Activated naive CD4-positive, alpha-beta T cell treated with anti-CD3 and anti-CD28 coated beads for 36 hours (primary cell): ENCODE measurements at regions of chr4 and their contacts with region 1.

Region 1: DNA sequence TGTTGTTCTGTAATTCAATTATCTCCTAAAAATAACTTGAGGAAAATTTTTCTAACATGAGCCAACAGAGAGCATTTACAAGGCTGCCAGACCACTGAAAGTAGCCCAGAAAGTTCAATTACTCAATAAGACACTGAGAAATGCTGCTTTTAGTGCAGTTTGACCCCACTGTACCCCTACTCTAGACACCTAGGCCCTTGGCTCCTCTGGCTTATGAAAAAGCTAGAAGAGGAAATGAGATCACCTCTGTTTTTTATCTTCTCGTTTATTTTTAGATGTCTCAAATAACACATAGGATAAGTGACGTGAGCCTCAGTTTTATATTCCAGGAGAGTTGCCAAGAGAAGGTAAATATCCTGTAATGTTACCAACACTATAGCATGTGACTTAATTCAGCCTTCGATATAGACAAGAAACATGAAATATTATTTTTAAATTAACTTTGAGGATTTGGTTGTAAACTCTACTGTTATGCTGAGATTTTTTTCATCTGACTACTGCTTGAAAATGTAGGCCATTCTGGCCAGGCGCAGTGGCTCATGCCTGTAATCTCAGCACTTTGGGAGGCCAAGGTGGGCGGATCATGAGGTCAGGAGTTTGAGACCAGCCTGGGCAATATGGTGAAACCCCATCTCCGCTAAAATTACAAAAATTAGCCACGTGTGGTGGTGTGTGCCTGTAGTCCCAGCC is 24.4 kb downstream of the TNIP3 start:
- DNase-seq: peak; percentile 29
- H3K4me3 Mint-ChIP-seq: no peak overlapping the region
- H3K27ac Mint-ChIP-seq: peak overlapping the region; percentile 79
- H3K4me1 Mint-ChIP-seq: peaks cover 57% of the 10 kb centered on the region
- H3K27me3 Mint-ChIP-seq: no peaks in the 10 kb centered on the region

Region 2: DNA sequence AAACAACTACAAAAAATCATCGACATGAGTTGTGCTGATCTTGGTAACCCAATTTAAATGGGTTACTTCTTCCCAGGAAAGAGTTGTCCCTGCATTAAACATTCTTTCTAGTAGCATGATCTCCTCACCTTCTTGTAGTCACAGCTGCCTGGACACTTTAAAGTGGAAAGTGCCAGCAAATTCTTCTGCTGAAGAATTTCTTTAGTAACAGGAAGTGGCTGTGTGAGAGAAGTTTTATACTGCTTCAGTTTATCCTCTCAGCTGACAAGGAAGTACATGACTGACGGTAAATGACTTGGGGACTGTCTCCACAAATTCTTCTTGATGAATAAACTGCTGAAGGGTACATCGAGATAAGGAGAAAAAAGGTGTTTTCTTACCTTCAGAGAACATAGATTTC is 42.6 kb after region 1 on chr4:
- CTCF ChIA-PET with region 1: interaction called, 5 read pairs
- intact Hi-C with region 1: loop called (anchors 1 kb)
- DNase-seq: peak; percentile 30
- H3K4me3 Mint-ChIP-seq: peak overlapping the region; percentile 71
- H3K27ac Mint-ChIP-seq: peak overlapping the region; percentile 91
- H3K4me1 Mint-ChIP-seq: peaks cover 60% of the 10 kb centered on the region
- H3K27me3 Mint-ChIP-seq: no peaks in the 10 kb centered on the region